Activated B cell treated with CpG ODN at 0.5 μM for 24 hours (primary cell): ENCODE measurements at regions of chr17 and their contacts with region 1.

Region 1: GRCh38 chr17:76182016-76182764 is 41.1 kb upstream of the FOXJ1 start:
- DNase-seq: peak; percentile 87
- ATAC-seq: peak; percentile 97
- H3K4me3 Mint-ChIP-seq: no peak overlapping the region
- H3K27ac Mint-ChIP-seq: no peak overlapping the region
- H3K4me1 Mint-ChIP-seq: peaks cover 34% of the 10 kb centered on the region
- H3K27me3 Mint-ChIP-seq: no peaks in the 10 kb centered on the region
- CTCF ChIP-seq: peak; percentile 21

Region 2: GRCh38 chr17:76111956-76112355 is 70.2 kb before region 1 on chr17:
- CTCF ChIA-PET with region 1: no interaction called
- POLR2A ChIA-PET with region 1: no interaction called
- intact Hi-C with region 1: no loop called
- DNase-seq: no peak
- ATAC-seq: no peak
- H3K4me3 Mint-ChIP-seq: no peak overlapping the region
- H3K27ac Mint-ChIP-seq: no peak overlapping the region
- H3K4me1 Mint-ChIP-seq: no peaks in the 10 kb centered on the region
- H3K27me3 Mint-ChIP-seq: no peaks in the 10 kb centered on the region
- CTCF ChIP-seq: no peak

Region 3: GRCh38 chr17:76141212-76142038 is 40.8 kb before region 1 on chr17 and contains the start of gene FOXJ1:
- CTCF ChIA-PET with region 1: interaction called, 7 read pairs
- POLR2A ChIA-PET with region 1: interaction called, 4 read pairs
- intact Hi-C with region 1: loop called (anchors 1 kb)
- DNase-seq: peak; percentile 91
- ATAC-seq: peak; percentile 75
- H3K4me3 Mint-ChIP-seq: peak within 1 kb of the TSS; percentile 80
- H3K27ac Mint-ChIP-seq: peak within 1 kb of the TSS; percentile 61
- H3K4me1 Mint-ChIP-seq: peaks cover 60% of the 10 kb centered on the region
- H3K27me3 Mint-ChIP-seq: peaks cover 10% of the 10 kb centered on the region
- CTCF ChIP-seq: no peak
- total RNA-seq, gene FOXJ1: 0.39 and 0.44 TPM in 2 replicates

Region 4: GRCh38 chr17:76884971-76885893 is 703.0 kb after region 1 on chr17:
- CTCF ChIA-PET with region 1: no interaction called
- POLR2A ChIA-PET with region 1: no interaction called
- intact Hi-C with region 1: no loop called
- DNase-seq: no peak
- ATAC-seq: no peak
- H3K4me3 Mint-ChIP-seq: no peak overlapping the region
- H3K27ac Mint-ChIP-seq: no peak overlapping the region
- H3K4me1 Mint-ChIP-seq: no peaks in the 10 kb centered on the region
- H3K27me3 Mint-ChIP-seq: peaks cover 11% of the 10 kb centered on the region
- CTCF ChIP-seq: no peak